AG04450 (cell line): ENCODE measurements at regions of chr7 and their contacts with region 1.

Region 1: GRCh38 chr7:100088621-100089457 is at the start of gene COPS6:
- DNase-seq: no peak
- H3K4me3 ChIP-seq: peak within 1 kb of the TSS; percentile 91
- H3K27ac ChIP-seq: peak within 1 kb of the TSS; percentile 97
- H3K27me3 ChIP-seq: no peaks in the 10 kb centered on the region
- CTCF ChIP-seq: no peak
- polyA plus RNA-seq, gene COPS6: 265 and 308 TPM in 2 replicates

Region 2: GRCh38 chr7:100101016-100101862 is 12.4 kb after region 1 on chr7 and contains the starts of genes AP4M1 and MCM7:
- CTCF ChIA-PET with region 1: interaction called, 5 read pairs
- POLR2A ChIA-PET with region 1: interaction called, 67 read pairs
- DNase-seq: peak; percentile 98
- H3K4me3 ChIP-seq: peak within 1 kb of the TSS; percentile 77
- H3K27ac ChIP-seq: peak within 1 kb of the TSS; percentile 88
- H3K27me3 ChIP-seq: no peaks in the 10 kb centered on the region
- CTCF ChIP-seq: no peak
- polyA plus RNA-seq, gene AP4M1: 25.4 and 26.1 TPM in 2 replicates
- polyA plus RNA-seq, gene MCM7: 39.5 and 44.2 TPM in 2 replicates

Region 3: GRCh38 chr7:100158229-100159098 is 69.6 kb after region 1 on chr7 and contains the start of gene TRAPPC14:
- CTCF ChIA-PET with region 1: no interaction called
- POLR2A ChIA-PET with region 1: no interaction called
- DNase-seq: peak; percentile 49
- H3K4me3 ChIP-seq: peak within 1 kb of the TSS; percentile 69
- H3K27ac ChIP-seq: peak within 1 kb of the TSS; percentile 47
- H3K27me3 ChIP-seq: no peaks in the 10 kb centered on the region
- CTCF ChIP-seq: no peak
- polyA plus RNA-seq, gene TRAPPC14: 3.5 and 6.2 TPM in 2 replicates